Activated CD8-positive, alpha-beta T cell treated with anti-CD3 and anti-CD28 coated beads for 36 hours (primary cell): ENCODE measurements at regions of chr1 and their contacts with region 1.

Region 1: DNA sequence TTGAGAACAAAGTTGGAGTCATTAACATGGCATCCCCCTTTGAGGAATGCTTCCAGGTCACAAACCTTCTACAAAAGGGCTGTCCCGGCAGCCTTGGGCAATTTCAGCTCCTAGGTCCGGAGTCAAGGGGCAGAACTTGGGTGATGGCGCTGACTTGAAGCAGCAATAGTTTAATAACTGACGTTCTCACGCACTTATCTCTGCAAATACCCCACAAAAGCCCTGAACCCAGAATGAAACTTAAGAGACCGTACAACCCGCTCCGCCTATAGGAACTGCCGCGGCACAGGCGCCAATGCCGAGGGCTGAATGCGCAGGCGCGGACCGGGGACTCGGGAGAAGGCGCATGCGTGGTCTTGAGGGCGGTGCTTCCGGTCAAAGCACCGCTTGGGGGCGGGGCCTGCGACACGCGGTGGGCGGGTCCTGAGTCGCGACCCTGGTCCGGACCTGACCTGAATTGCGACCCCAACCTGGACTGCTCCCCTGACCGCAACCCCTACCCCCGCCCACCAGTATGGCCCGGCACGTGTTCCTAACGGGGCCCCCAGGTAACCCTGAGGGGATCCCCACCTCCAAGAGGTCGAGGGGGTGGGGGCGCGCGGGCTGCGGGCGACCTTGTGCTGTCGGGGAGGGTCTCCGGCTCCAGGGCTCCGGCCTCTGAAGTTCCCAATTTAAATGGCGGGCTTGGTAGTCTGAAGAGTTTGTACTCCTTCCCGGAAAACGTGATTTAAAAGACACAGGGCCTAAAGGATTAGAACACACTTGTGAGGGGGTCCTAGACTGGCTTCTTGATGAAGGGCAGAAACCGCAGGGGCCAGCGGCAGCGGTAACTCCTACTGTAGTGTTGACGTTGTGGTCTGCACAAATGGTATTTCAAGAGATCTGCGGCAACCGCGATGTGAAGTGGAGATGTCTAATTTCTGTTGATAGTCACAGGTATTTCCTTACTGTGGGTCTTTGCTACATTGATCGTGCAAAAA is at the start of gene NTPCR:
- DNase-seq: peak; percentile 95
- ATAC-seq: peak; percentile 98
- H3K4me3 Mint-ChIP-seq: peak within 1 kb of the TSS; percentile 96
- H3K27ac Mint-ChIP-seq: peak within 1 kb of the TSS; percentile 95
- H3K4me1 Mint-ChIP-seq: peaks cover 37% of the 10 kb centered on the region
- H3K27me3 Mint-ChIP-seq: no peaks in the 10 kb centered on the region
- CTCF ChIP-seq: no peak
- total RNA-seq, gene NTPCR: 30.4 to 35.0 TPM

Region 2: DNA sequence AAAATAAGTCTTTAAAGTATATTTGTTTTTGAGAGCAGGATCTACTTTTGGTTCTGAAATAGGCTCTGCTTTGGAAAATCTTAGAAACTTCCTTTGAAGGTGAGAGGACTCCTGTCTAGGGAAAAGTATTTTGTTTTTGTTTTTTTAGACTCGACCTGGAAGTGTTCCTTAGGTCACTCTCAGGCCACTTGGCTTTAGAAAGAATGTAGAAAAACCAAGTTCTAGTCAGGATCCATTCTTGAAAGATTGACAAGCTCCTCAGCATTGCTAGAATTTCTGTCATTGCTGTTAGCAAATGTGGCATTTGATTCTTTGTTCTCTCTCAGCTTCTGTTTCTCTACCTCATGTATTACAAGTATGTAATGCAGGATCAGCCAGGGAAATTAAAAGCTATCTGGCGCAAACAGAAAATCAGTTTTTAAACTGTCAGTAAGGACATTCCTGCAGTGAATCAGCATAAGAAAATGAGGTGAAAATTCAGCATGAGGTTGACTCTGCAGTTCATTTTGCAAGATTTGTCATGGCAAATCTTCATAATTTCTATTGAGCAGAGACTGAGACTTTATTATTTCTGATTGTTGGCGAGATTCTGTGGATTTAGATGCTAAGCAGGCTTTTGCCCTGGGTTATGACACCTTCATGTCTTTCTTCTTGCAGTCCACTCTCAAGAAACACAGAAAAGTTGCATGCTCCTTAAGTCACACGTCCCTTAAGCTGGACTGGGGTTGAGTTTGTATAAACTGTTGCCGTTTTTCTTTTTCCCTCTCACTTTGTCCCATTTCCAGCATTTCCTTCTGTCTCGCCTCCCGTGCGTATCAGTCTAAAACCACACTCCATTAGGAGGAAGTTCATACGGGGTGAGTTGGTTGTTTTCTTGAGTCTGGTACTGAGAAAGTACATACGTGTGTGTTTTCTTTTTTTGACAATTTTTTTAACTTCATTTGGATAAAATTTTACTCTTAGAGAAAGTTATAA is 12.6 kb after region 1 on chr1:
- CTCF ChIA-PET with region 1: interaction called, 17 read pairs
- POLR2A ChIA-PET with region 1: no interaction called
- intact Hi-C with region 1: no loop called
- DNase-seq: no peak
- ATAC-seq: no peak
- H3K4me3 Mint-ChIP-seq: no peak overlapping the region
- H3K27ac Mint-ChIP-seq: no peak overlapping the region
- H3K4me1 Mint-ChIP-seq: peaks cover 24% of the 10 kb centered on the region
- H3K27me3 Mint-ChIP-seq: no peaks in the 10 kb centered on the region
- CTCF ChIP-seq: no peak

Region 3: DNA sequence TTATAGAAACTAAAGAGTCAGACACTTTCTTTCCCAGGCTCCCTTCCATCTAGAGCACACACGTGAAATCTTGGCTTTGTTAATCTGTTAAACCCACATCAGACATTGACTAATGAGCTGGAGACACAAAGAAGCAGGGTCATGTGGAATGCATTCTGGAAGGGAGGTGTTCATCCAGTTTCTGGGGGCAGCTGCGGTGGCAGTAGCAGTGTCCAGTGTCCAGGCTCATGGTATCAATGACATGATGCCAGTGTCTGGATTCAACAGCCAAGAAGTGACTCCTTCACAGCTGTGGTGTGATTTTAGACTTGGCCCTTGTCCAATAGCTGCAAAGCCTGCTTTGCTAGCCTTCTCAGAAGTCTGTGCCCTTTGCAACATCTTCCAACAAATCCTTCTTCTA is 95.1 kb after region 1 on chr1:
- CTCF ChIA-PET with region 1: no interaction called
- POLR2A ChIA-PET with region 1: no interaction called
- intact Hi-C with region 1: no loop called
- DNase-seq: no peak
- ATAC-seq: no peak
- H3K4me3 Mint-ChIP-seq: no peak overlapping the region
- H3K27ac Mint-ChIP-seq: no peak overlapping the region
- H3K4me1 Mint-ChIP-seq: no peaks in the 10 kb centered on the region
- H3K27me3 Mint-ChIP-seq: no peaks in the 10 kb centered on the region
- CTCF ChIP-seq: no peak